ENCODE measurements at regions of chr16 and their contacts with region 1.

Region 1: DNA sequence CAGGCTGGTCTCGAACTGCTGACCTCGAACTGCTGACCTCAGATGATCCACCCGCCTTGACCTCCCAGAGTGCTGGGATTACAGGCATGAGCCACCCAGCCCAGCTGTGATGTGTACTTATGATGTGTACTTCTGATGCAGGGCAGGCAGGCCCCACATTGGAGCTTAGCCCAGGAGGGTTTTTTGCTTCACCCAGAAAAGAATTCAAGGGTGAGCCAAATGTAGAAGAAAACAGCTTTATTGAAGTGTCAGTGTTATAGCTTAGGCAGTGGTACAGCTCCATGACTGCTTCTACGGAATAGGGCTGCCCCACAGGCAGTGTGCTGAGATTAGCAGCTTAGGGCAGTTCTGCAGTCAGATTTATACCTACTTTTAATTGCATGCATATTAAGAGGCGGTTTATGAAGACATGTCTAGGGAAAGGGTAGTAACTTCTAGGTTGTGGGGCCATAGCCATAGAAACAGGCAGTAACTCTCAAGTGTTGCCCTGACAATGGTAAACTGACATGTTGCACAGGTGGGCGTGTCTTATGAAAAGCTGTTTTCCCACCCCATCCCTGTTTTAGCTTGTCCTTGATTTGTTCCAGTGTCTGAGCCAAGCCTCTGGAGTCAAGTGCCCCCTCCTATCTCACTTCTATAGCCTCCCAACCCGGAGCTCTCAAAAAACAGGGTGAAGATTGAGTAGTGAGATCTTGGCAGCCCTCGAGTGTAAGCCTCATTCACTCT is 24.2 kb upstream of the POLR3E start:
- DNase-seq: no peak
- ATAC-seq: peak; percentile 84

Region 2: DNA sequence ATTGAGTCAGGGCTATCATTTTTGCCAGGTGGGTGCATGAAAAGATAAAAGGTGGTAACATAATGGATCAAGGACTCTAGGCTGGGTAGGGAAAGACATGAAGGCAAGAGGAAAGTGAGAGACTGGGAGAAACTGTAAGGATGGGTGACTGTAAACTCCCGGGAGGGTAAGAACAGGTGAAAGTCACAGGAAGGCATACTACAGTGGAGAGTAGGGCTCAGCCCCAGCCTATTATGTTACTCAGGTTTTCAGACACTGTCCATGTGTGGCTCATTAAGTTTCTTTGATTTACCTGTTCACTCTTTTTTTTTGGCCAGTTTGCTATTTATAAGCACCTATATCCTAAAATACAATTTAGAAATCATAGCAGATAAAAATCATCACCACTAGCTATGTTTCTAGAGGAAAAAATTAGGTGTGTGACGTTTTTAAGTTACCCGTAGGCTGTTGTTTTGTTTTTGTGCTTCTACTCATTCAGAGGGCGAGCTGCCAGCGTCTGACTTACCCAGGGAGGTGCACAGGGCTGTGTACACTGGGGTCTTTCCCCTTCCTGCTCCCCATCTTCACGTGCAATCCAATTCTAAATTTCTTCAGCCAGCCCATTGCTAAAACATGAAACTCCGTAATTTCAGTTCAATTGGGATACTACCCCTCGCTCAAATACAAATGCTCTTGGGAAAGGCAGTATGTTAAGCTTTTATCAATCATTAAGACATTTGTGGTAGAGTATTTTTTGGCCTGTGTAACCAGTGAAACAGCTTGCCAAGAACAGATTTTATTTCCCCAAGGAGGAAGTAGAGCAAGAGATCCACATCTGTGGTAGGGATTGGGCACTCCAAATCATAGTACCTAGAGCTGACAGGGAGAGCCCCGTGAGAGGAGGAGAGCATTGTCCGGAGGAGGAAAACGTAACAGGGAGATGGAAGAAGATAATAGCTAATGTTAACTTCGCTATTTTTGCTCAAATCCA is 202.4 kb before region 1 on chr16:
- intact Hi-C with region 1: no loop called
- DNase-seq: no peak
- ATAC-seq: peak; percentile 46

Region 3: DNA sequence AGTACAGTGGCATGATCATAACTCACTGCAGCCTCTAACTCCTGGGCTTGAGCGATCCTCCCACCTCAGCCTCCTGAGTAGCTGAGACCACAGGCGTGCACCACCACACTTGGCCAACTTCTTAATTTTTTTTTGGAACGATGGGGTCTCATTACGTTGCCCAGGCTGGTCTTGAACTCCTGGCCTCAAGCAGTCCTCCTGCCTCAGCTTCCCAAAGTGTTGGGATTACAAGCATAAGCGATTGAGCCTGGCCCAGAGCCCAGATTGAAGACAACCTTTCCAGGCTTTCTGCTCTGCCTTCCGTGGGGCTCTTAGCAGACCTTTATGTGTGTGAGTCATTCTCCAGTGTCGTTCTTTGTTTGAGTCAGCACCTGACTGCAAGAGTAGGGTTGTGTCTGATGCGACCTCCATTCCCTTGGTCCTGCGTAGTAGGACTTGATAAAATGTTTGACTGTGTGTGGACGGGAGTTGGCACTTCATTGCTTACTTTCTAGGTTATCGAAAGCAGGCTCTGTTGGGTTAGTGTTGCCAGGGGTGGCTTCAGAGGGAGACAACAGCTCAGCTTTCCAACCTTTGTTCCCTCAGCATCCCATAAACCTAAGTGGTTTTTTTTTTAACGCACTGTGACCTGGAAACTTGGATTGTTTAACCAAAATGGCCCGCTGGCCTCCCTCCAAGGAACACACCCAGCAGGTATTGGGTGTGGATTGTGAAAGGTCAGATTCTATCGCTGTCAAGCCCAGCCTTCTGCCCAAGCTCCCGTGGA is 40.6 kb before region 1 on chr16:
- intact Hi-C with region 1: loop called (anchors 5 kb)
- DNase-seq: no peak
- ATAC-seq: peak; percentile 45

Measured in Right ventricle myocardium inferior (tissue), 1 donor.